Activated T-helper 2 cell treated with anti-CD3 and anti-CD28 coated beads, Interferon-gamma antibody, Interleukin-2, Interleukin-4, amounts not matched to agents 10 μg/mL and 5 μg/mL and 100 μg/mL, durations not matched to agents 14 hours and 24 hours and 36 hours (primary cell): ENCODE measurements at regions of chrX and their contacts with region 1.

Region 1: GRCh38 chrX:72269671-72270251 is 7.3 kb downstream of the RPS4X start:
- DNase-seq: peak; percentile 13
- H3K4me3 Mint-ChIP-seq: peak overlapping the region; percentile 33
- H3K27ac Mint-ChIP-seq: peak overlapping the region; percentile 94
- H3K4me1 Mint-ChIP-seq: peaks cover 31% of the 10 kb centered on the region
- H3K27me3 Mint-ChIP-seq: no peaks in the 10 kb centered on the region

Region 2: GRCh38 chrX:72131317-72132294 is 138.2 kb before region 1 on chrX and contains the start of gene RTL5:
- intact Hi-C with region 1: no loop called
- DNase-seq: no peak
- H3K4me3 Mint-ChIP-seq: peak within 1 kb of the TSS; percentile 37
- H3K27ac Mint-ChIP-seq: no peak within 1 kb of the TSS
- H3K4me1 Mint-ChIP-seq: peaks cover 7% of the 10 kb centered on the region
- H3K27me3 Mint-ChIP-seq: peaks cover 52% of the 10 kb centered on the region
- total RNA-seq, gene RTL5: 0.23 and 0.25 TPM in 2 replicates

Region 3: DNA sequence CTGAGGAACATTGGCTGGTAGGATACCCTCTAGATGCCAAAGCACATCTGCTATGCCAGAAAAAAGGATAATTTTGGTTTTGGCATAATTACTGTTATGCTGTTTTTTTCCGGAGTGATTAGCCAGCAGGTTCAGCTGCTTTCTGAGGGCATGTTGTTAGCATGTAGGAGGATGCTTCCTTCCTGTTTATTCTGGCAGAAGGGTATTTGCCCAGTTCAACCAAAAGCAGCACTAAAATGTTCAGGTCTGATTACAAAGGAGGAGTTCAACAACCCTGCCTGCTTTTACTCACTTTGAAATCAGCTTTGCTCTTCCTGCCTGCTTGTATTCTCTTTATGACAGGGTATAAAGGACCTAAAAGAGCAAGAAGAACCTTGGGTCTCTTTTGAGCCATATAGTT is 52.8 kb before region 1 on chrX:
- intact Hi-C with region 1: no loop called
- DNase-seq: no peak
- H3K4me3 Mint-ChIP-seq: no peak overlapping the region
- H3K27ac Mint-ChIP-seq: no peak overlapping the region
- H3K4me1 Mint-ChIP-seq: no peaks in the 10 kb centered on the region
- H3K27me3 Mint-ChIP-seq: no peaks in the 10 kb centered on the region

Region 4: GRCh38 chrX:72258174-72258573 is 11.6 kb before region 1 on chrX:
- intact Hi-C with region 1: no loop called
- DNase-seq: no peak
- H3K4me3 Mint-ChIP-seq: no peak overlapping the region
- H3K27ac Mint-ChIP-seq: no peak overlapping the region
- H3K4me1 Mint-ChIP-seq: no peaks in the 10 kb centered on the region
- H3K27me3 Mint-ChIP-seq: peaks cover 25% of the 10 kb centered on the region

Region 5: GRCh38 chrX:72306851-72307645 is 37.3 kb after region 1 on chrX:
- intact Hi-C with region 1: loop called (anchors 5 kb)
- DNase-seq: no peak
- H3K4me3 Mint-ChIP-seq: peak overlapping the region; percentile 78
- H3K27ac Mint-ChIP-seq: no peak overlapping the region
- H3K4me1 Mint-ChIP-seq: peaks cover 14% of the 10 kb centered on the region
- H3K27me3 Mint-ChIP-seq: peaks cover 59% of the 10 kb centered on the region